Activated CD4-positive, alpha-beta memory T cell treated with anti-CD3 and anti-CD28 coated beads, Interleukin-2, amount 10 ng/mL, durations not matched to agents 7 days and 5 days (primary cell): ENCODE measurements at regions of chr10 and their contacts with region 1.

Region 1: DNA sequence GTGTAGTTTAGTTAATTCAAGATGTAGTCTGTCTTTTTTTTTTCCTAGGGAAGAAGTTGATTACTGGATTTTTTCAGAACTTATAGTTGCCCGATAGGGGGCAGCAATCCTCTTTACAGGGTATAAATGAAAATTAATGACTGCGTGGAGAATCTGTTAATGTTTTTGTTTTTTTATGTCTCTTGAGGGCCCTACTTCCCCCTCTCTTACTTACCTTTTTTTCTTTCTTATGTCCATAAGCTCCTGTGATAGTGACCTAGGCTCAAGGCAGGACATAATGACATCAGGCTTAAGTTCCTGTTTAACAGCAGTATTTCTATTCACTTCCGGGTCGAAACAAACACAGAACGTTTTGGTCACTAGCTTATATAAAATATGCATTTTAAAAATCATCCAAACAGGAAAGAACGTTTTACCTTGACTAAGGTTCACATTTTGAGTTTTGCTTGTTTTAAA is 18.8 kb downstream of the CDC123 start:
- DNase-seq: peak; percentile 33
- H3K4me3 Mint-ChIP-seq: peak overlapping the region; percentile 29
- H3K27ac Mint-ChIP-seq: peak overlapping the region; percentile 69
- H3K4me1 Mint-ChIP-seq: peaks cover 19% of the 10 kb centered on the region
- H3K27me3 Mint-ChIP-seq: no peaks in the 10 kb centered on the region

Region 2: DNA sequence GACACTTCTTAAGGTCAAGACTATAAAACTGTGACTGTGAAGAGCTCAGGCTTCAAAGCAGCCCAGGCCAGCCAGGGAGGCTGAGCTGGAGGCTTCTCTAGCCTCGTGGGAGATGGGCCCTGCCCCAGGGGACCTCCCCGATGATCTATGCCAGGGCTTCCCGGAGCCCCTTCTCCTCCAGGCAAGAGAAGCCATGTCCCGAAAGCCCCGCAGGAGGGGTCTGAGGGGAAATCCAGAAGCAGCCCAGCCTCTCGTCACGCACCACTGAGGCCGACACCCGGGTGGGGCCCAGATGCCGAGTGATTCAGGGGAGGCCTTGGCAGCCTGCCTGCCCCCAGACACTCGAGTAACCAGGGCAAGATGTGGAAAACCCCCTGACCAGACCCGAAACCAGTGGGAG is 327.9 kb before region 1 on chr10:
- CTCF ChIA-PET with region 1: no interaction called
- POLR2A ChIA-PET with region 1: no interaction called
- DNase-seq: no peak
- H3K4me3 Mint-ChIP-seq: no peak overlapping the region
- H3K27ac Mint-ChIP-seq: no peak overlapping the region
- H3K4me1 Mint-ChIP-seq: peaks cover 10% of the 10 kb centered on the region
- H3K27me3 Mint-ChIP-seq: no peaks in the 10 kb centered on the region

Region 3: DNA sequence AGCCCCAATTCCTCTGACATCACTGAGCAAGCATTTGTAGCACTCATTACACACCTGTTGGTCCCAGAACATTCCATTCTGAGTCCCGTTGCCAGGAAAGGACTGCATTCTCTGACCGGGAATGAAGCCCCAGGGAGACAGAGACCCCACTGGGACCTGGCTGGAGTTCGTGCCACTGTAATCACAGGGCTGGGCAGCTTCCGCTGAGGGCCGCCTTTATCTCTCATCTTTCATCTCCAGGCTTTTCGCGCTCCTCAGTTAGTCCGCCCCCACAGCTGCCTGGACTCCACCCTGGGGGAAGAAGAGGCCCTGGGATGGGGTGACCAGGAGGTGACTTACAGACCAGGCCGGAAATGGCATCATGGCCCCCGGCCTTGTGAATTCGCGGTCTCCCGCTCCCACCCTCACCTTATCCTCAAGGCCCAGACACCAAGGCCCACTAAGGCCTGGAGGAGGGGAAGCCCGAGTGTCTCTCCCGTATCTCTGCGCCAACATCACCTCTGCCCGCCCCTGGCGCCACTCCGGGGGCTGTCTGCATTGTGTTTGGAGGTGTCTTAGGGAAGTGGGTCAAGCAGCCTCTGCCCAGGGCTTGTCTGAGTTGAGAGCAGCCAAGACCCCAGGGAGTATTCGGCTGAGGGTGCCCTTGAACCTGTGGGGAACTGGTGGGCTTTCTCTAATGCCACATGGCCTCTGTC is 316.3 kb before region 1 on chr10:
- CTCF ChIA-PET with region 1: no interaction called
- POLR2A ChIA-PET with region 1: no interaction called
- DNase-seq: no peak
- H3K4me3 Mint-ChIP-seq: no peak overlapping the region
- H3K27ac Mint-ChIP-seq: no peak overlapping the region
- H3K4me1 Mint-ChIP-seq: peaks cover 6% of the 10 kb centered on the region
- H3K27me3 Mint-ChIP-seq: peaks cover 3% of the 10 kb centered on the region

Region 4: DNA sequence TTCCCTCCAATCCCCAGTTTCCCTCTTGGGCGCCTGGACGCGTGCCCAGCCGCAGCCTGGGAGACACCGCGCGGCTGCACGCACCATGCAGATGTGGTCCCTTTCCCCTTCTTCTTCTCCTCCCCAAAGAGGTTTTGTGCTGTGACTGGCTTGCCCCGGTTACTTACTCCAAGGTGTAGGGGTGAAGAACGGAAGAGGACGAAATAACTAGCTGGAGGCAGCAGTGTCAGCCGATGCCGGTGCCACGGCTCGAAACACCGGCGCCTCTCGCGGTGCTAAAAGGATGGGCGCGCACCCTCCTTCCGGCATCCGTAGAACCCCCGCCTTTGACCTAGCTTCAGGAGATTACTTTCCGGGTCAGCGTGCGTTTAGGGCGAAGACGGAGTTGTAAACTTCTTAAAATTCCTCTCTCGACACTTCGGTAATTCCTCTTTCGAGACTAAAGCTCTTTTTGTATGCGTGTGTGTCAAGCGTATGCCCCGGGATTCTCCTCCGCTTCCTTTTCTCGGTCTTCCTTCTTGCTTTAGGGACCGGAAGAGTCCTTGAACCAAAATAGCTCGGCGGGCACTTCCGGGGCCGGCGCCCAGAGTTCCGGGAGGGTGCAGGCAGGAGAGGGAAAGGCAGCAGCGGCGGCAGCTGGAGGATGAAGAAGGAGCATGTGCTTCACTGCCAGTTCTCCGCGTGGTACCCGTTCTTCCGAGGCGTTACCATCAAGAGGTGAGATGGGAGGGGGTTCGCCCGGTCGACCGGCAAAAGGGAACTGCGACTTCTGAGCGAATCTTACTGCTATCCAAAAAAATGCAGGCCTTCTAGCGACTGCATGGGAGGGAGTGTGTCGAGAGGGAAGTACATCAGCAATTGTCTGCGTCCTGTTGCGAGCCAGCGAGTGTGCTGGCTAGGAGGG is 18.9 kb before region 1 on chr10 and contains the starts of genes CDC123 and NUDT5:
- CTCF ChIA-PET with region 1: interaction called, 22 read pairs
- POLR2A ChIA-PET with region 1: interaction called, 6 read pairs
- DNase-seq: peak; percentile 90
- H3K4me3 Mint-ChIP-seq: peak within 1 kb of the TSS; percentile 89
- H3K27ac Mint-ChIP-seq: peak within 1 kb of the TSS; percentile 99
- H3K4me1 Mint-ChIP-seq: peaks cover 64% of the 10 kb centered on the region
- H3K27me3 Mint-ChIP-seq: no peaks in the 10 kb centered on the region
- total RNA-seq, gene CDC123: 89.5 to 95.1 TPM
- total RNA-seq, gene NUDT5: 91.6 to 91.7 TPM

Region 5: GRCh38 chr10:12225444-12225843 is 10.7 kb after region 1 on chr10:
- CTCF ChIA-PET with region 1: interaction called, 14 read pairs
- POLR2A ChIA-PET with region 1: no interaction called
- DNase-seq: no peak
- H3K4me3 Mint-ChIP-seq: no peak overlapping the region
- H3K27ac Mint-ChIP-seq: no peak overlapping the region
- H3K4me1 Mint-ChIP-seq: peaks cover 2% of the 10 kb centered on the region
- H3K27me3 Mint-ChIP-seq: no peaks in the 10 kb centered on the region

Region 6: GRCh38 chr10:12287772-12288171 is 73.0 kb after region 1 on chr10:
- CTCF ChIA-PET with region 1: no interaction called
- POLR2A ChIA-PET with region 1: no interaction called
- DNase-seq: no peak
- H3K4me3 Mint-ChIP-seq: no peak overlapping the region
- H3K27ac Mint-ChIP-seq: no peak overlapping the region
- H3K4me1 Mint-ChIP-seq: peaks cover 2% of the 10 kb centered on the region
- H3K27me3 Mint-ChIP-seq: peaks cover 2% of the 10 kb centered on the region

Region 7: DNA sequence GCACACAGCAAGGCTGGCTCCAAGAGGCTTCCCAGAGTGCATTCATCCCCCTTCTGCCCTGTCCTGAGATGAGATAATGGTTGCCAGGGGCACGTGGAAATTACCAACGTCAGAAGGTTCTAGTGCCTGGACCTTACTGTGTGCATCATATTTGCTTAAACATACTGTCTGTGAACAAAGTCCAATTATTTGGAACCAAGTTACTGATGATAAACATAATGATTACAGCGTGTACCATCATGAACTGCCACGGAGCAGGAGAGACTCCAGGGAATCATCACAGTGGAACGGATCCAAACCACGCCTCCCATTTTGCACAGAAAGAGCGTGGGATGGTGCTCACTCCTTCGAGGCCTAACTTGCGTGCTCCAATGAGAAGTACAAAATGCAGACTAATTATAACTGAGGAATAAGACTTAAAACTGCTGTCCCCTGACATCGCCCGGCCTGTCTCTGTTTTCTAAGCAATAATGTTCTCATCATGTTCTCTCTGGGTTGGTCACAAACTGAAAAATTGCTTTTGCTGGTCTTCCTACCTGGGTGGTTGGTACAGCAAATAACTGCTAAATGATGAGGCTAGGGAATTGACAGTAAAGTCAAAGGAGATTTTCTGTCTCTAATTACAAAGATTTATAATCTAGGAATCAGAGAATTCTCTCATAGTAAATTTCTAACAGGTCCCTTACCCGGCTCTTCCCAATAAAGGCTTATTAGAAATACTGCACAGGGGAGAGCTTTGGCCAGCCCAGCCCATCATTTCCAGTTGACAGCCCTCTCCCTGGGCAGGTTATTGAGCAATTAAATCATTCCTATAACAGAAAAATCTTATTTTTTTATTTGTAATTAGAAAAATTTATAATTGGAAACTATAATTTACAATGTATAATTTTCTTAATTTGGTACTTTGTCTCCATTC is 316.8 kb after region 1 on chr10:
- CTCF ChIA-PET with region 1: no interaction called
- POLR2A ChIA-PET with region 1: no interaction called
- DNase-seq: no peak
- H3K4me3 Mint-ChIP-seq: no peak overlapping the region
- H3K27ac Mint-ChIP-seq: no peak overlapping the region
- H3K4me1 Mint-ChIP-seq: peaks cover 24% of the 10 kb centered on the region
- H3K27me3 Mint-ChIP-seq: no peaks in the 10 kb centered on the region

Region 8: DNA sequence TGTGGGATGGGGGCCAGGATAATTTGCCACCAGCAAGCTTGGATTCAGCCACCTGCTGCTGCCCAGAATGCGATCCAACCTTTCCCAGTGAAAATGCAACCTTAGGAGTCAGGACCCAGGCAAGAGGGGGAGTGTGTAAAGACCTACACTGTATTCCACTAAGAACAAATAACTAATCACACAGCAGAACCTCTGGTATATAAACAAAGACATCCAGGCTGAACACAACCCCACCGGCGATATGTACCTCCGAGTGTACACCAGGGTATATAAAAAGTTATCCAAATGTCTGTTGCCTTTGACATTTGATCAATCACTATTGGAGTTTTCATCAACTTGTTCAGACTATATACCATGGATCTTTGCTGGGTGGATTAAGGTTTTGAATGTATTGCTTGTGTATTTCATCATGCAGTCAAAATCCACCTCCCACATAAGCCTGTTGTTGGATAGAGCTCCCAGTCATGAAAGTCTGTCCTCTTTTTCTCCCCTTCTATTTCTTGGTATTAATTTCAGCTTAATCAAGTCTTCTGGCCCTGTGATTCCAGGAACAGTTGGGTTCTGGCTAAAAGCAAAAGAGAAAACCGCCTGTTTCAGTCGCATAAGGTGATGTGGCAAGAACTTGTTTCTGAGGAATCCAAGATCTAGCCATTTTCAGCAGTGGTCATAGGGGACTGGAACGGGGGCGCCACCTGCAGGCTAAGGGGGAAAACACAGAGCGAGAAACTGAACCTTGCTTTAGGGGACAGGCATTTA is 496.0 kb after region 1 on chr10:
- CTCF ChIA-PET with region 1: interaction called, 30 read pairs
- POLR2A ChIA-PET with region 1: interaction called, 3 read pairs
- DNase-seq: peak; percentile 85
- H3K4me3 Mint-ChIP-seq: no peak overlapping the region
- H3K27ac Mint-ChIP-seq: peak overlapping the region; percentile 83
- H3K4me1 Mint-ChIP-seq: peaks cover 68% of the 10 kb centered on the region
- H3K27me3 Mint-ChIP-seq: no peaks in the 10 kb centered on the region